KBM-7 (cell line): ENCODE measurements at regions of chr1 and their contacts with region 1.

Region 1: DNA sequence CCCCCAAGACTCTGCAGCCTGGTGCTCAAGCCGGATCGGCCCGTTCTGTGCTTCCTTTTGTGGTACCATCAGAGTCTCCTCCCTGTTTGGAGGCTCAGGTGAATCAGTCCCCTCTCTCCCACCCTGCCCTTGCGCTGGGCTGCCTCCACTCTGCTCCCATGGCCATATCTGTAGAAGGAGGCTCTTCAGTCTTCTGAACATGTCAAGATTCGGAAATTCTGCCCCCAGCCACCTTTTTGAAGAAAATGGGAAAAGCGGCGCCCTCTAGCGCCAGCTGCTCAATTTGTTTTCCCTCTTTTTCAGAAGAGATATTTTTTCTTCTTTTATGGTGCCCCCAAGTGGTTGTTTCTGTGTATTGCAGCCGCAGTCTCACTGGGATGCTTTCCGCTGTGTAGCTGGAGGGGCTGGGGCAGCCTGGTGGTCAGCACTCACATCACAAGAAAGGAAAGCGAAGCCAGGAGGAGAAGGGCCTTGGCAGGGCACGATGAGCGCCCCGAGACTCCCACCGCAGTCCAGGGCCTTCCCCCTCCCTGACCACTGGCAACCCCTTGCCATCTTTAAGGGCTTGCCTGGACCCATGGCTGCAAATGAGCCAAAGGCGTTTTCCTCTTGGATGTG is 58.4 kb upstream of the CACNA1E start:
- DNase-seq: peak; percentile 94

Region 2: DNA sequence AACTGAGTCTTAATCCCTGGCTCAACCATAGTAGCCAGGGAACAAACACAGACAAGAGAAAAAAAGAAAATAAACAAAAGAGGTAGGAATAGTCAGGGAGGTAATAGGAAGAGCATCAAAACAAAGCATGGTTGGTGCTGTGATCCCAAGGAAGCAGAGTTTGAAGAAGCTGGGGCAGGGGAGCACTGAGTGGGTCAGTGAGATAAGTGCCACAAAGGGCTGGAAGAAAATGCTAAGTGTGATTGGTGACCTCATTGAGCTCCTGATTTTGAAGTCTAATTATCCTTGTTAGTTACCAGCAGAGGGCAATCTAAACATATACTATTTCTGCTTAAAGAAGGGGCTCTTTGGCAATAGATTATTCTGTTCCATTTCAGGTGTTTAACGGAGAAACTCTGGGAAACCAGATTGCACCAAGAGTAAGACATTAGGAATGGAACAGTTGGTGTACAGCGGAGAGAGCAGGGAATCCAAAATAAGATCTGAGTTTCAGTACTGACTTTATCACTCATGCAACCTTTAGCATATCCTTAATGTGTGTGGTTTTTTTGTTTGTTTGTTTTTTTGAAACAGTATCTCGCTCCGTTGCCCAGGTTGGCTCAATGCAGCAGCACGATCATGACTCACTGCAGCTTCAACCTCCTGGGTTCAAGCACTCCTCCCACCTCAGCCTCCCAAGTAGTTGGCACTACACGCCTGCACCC is 542.9 kb before region 1 on chr1:
- in situ Hi-C with region 1: loop called (anchors 25 kb)
- DNase-seq: peak; percentile 52